Calu3 (cell line): ENCODE measurements at regions of chr4 and their contacts with region 1.

Region 1: GRCh38 chr4:181860157-181860556 is 383.0 kb upstream of the TENM3 start:
- DNase-seq: no peak
- H3K4me3 Mint-ChIP-seq: no peak overlapping the region
- H3K27ac Mint-ChIP-seq: no peak overlapping the region
- H3K4me1 Mint-ChIP-seq: no peaks in the 10 kb centered on the region
- H3K27me3 Mint-ChIP-seq: peaks cover 11% of the 10 kb centered on the region
- CTCF ChIP-seq: no peak

Region 2: DNA sequence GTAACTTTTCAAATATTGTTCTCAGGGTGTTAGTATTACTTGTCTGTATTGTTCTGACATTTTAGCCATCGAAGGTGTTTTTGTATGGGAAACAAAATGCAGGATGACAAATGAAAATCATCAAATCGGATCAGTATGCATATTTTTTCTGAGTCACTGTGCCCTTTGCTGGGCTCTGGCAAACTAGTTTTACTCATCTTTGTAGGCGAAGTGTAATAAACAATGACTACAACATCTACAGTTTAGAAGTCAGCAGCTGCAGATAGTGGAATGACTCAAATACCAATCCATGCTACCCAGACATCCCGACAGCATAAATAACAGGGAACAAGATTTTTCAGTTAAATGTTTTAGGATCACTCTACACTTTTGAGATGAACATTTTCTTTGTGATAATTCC is 174.2 kb before region 1 on chr4:
- CTCF ChIA-PET with region 1: no interaction called
- intact Hi-C with region 1: no loop called
- DNase-seq: no peak
- H3K4me3 Mint-ChIP-seq: no peak overlapping the region
- H3K27ac Mint-ChIP-seq: no peak overlapping the region
- H3K4me1 Mint-ChIP-seq: no peaks in the 10 kb centered on the region
- H3K27me3 Mint-ChIP-seq: no peaks in the 10 kb centered on the region
- CTCF ChIP-seq: no peak

Region 3: DNA sequence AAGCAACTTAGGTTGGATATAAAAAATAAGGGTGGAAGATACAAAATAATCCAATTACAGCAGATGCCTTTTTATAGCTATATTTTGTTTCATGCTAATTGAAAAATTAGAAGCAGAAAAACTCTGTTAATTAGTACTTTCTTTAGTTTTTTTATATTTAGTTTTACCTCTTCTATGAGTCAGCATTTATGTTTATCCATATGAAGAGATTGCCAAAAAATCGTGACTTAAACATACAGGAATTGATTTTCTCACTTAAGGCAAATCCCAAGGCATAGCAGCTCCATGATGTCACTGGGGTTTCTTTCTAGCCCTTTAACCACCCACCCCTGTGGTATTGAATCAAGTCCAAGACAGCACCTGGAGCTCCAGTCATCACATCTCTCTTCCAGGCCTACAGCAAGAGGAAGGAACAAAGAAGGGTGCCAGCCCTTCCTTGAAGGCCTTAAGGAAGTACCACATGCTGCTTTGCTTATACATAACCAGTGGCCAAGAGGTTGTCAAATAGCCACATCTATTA is 17.2 kb after region 1 on chr4:
- CTCF ChIA-PET with region 1: interaction called, 12 read pairs
- intact Hi-C with region 1: no loop called
- DNase-seq: peak; percentile 22
- H3K4me3 Mint-ChIP-seq: no peak overlapping the region
- H3K27ac Mint-ChIP-seq: no peak overlapping the region
- H3K4me1 Mint-ChIP-seq: no peaks in the 10 kb centered on the region
- H3K27me3 Mint-ChIP-seq: no peaks in the 10 kb centered on the region
- CTCF ChIP-seq: no peak

Region 4: DNA sequence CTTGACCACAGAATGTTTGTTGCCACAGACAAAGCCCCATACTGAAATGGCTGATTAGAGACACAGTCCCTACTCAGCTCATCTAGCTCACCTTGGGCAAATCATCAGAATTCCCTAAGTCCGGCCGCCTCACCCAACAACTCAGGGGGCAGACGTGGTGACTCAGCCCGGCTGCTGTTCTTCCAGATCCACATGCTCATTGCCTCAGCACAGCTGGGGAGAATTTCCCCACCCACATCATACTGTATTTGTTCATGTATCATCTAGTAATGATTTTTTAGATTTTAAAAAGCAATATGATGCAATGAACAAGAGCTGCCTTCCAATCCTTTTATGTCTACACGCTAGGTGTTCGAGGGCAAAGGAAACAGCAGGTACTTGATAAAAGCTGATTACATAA is 49.2 kb after region 1 on chr4:
- CTCF ChIA-PET with region 1: no interaction called
- intact Hi-C with region 1: no loop called
- DNase-seq: peak; percentile 6
- H3K4me3 Mint-ChIP-seq: no peak overlapping the region
- H3K27ac Mint-ChIP-seq: no peak overlapping the region
- H3K4me1 Mint-ChIP-seq: no peaks in the 10 kb centered on the region
- H3K27me3 Mint-ChIP-seq: no peaks in the 10 kb centered on the region
- CTCF ChIP-seq: no peak